B cell (primary cell): ENCODE measurements at regions of chr15 and their contacts with region 1.

Region 1: GRCh38 chr15:45587095-45587860 is at the start of gene BLOC1S6:
- DNase-seq: peak; percentile 99
- ATAC-seq: peak; percentile 86
- H3K4me3 ChIP-seq: peak within 1 kb of the TSS; percentile 64 to 98 (median 89)
- H3K4me3 Mint-ChIP-seq: peak within 1 kb of the TSS; percentile 100
- H3K27ac ChIP-seq: peak within 1 kb of the TSS; percentile 98 to 99
- H3K27ac Mint-ChIP-seq: peak within 1 kb of the TSS; percentile 100
- H3K4me1 ChIP-seq: peaks cover 22 to 29% of the 10 kb centered on the region in 2 donors
- H3K4me1 Mint-ChIP-seq: peaks cover 46% of the 10 kb centered on the region
- H3K27me3 ChIP-seq: no peaks in the 10 kb centered on the region
- H3K27me3 Mint-ChIP-seq: no peaks in the 10 kb centered on the region
- CTCF ChIP-seq: no peak
- total RNA-seq, gene BLOC1S6: 51.3 and 60.8 TPM in 2 replicates

Region 2: GRCh38 chr15:45573961-45574629 is 13.2 kb before region 1 on chr15:
- CTCF ChIA-PET with region 1: interaction called, 5 read pairs
- POLR2A ChIA-PET with region 1: interaction called, 10 read pairs
- intact Hi-C with region 1: no loop called
- DNase-seq: peak; percentile 27
- ATAC-seq: peak; percentile 36
- H3K4me3 ChIP-seq: no peak overlapping the region
- H3K4me3 Mint-ChIP-seq: no peak overlapping the region
- H3K27ac ChIP-seq: no peak overlapping the region
- H3K27ac Mint-ChIP-seq: peak overlapping the region; percentile 74
- H3K4me1 ChIP-seq: peaks cover 13 to 24% of the 10 kb centered on the region in 2 donors
- H3K4me1 Mint-ChIP-seq: peaks cover 23% of the 10 kb centered on the region
- H3K27me3 ChIP-seq: no peaks in the 10 kb centered on the region
- H3K27me3 Mint-ChIP-seq: no peaks in the 10 kb centered on the region
- CTCF ChIP-seq: peak; percentile 30

Region 3: DNA sequence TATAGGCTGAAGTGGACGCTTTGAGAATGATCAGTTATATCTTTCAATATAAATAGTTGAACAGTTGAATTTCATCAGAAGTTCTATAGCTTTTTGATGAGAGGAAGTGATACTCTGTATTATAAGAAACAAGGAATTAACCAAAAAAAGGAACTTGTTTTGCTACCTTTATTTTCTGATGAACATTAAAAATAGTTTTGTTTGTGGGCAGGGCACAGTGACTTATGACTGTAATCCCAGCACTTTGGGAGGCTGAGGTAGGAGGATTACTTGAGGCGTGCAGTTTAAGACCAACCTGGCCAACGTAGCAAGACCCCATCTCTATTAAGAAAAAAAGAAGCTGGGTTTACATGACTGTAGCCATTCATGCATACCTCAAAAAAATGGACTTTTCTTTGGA is 16.6 kb after region 1 on chr15:
- CTCF ChIA-PET with region 1: interaction called, 6 read pairs
- POLR2A ChIA-PET with region 1: interaction called, 9 read pairs
- intact Hi-C with region 1: loop called (anchors 2 kb)
- DNase-seq: peak; percentile 51
- ATAC-seq: peak; percentile 58
- H3K4me3 ChIP-seq: no peak overlapping the region
- H3K4me3 Mint-ChIP-seq: peak overlapping the region; percentile 5
- H3K27ac ChIP-seq: peak overlapping the region; percentile 55 to 62
- H3K27ac Mint-ChIP-seq: peak overlapping the region; percentile 64
- H3K4me1 ChIP-seq: peaks cover 31 to 40% of the 10 kb centered on the region in 2 donors
- H3K4me1 Mint-ChIP-seq: peaks cover 43% of the 10 kb centered on the region
- H3K27me3 ChIP-seq: no peaks in the 10 kb centered on the region
- H3K27me3 Mint-ChIP-seq: no peaks in the 10 kb centered on the region
- CTCF ChIP-seq: no peak

Region 4: DNA sequence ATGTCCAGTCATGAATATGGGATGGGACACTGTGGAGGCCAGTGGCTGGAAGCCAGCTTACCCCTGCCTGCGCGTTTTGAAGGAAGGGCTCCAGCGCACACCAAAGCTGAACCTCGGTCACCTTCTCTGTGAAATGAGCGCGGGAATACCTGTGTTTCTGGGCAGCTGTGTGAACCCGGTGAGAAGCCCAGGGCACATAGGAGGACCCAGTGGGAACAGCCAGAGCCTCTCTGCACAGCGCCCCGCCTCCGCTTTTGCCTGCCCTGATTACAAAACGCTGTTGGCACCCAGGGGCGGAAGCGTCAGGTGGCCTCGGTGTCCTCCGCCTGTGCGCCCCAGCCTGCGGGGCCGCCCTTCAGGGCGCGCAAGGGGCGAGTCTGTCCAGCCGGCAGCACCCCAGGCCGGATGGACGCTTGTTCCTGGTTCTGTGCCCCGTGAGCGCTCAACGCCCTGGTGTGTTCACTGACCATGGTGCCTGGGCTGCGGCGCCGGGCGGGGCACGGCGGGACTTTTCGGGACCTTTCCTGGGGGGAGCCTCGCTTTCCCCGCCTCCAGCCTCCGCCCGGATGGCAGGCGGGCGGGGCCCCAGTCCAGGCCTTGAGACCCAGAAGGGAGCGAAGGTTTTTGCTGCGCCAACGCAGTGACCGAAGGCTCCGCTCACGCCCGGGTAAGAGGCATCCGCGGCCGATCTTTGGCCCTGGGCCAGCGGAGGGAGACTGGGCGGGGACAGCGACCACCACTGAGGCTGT is 47.3 kb after region 1 on chr15 and contains the start of gene SQOR:
- CTCF ChIA-PET with region 1: interaction called, 4 read pairs
- POLR2A ChIA-PET with region 1: interaction called, 9 read pairs
- intact Hi-C with region 1: loop called (anchors 1 kb)
- DNase-seq: peak; percentile 79
- ATAC-seq: peak; percentile 74
- H3K4me3 ChIP-seq: peak within 1 kb of the TSS; percentile 81 to 91 (median 86)
- H3K4me3 Mint-ChIP-seq: peak within 1 kb of the TSS; percentile 99
- H3K27ac ChIP-seq: peak within 1 kb of the TSS; percentile 69 to 78
- H3K27ac Mint-ChIP-seq: peak within 1 kb of the TSS; percentile 97
- H3K4me1 ChIP-seq: peaks cover 30 to 36% of the 10 kb centered on the region in 2 donors
- H3K4me1 Mint-ChIP-seq: peaks cover 39% of the 10 kb centered on the region
- H3K27me3 ChIP-seq: no peaks in the 10 kb centered on the region
- H3K27me3 Mint-ChIP-seq: no peaks in the 10 kb centered on the region
- CTCF ChIP-seq: no peak
- total RNA-seq, gene SQOR: 24.3 and 25.6 TPM in 2 replicates

Region 5: GRCh38 chr15:45759936-45760335 is 172.7 kb after region 1 on chr15:
- CTCF ChIA-PET with region 1: no interaction called
- POLR2A ChIA-PET with region 1: no interaction called
- intact Hi-C with region 1: no loop called
- DNase-seq: no peak
- ATAC-seq: no peak
- H3K4me3 ChIP-seq: no peak overlapping the region
- H3K4me3 Mint-ChIP-seq: no peak overlapping the region
- H3K27ac ChIP-seq: no peak overlapping the region
- H3K27ac Mint-ChIP-seq: no peak overlapping the region
- H3K4me1 ChIP-seq: no peaks in the 10 kb centered on the region
- H3K4me1 Mint-ChIP-seq: no peaks in the 10 kb centered on the region
- H3K27me3 ChIP-seq: peaks cover 0 to 10% (median 0%) of the 10 kb centered on the region in 4 experiments
- H3K27me3 Mint-ChIP-seq: peaks cover 27% of the 10 kb centered on the region
- CTCF ChIP-seq: no peak